HepG2 (cell line): ENCODE measurements at regions of chr14 and their contacts with region 1.

Region 1: GRCh38 chr14:23640524-23641141 is 4.5 kb downstream of the DHRS2 start:
- DNase-seq: peak; percentile 54
- ATAC-seq: no peak
- H3K4me3 ChIP-seq: peak overlapping the region in 1 of 3 experiments; percentile 74; a peak in 1 of 6 replicates
- H3K27ac ChIP-seq: peak overlapping the region; percentile 59
- H3K4me1 ChIP-seq: peaks cover 65% of the 10 kb centered on the region
- H3K27me3 ChIP-seq: no peaks in the 10 kb centered on the region; a peak in 1 of 5 replicates
- CTCF ChIP-seq: no peak
- EP300 ChIP-seq: no peak
- POLR2A ChIP-seq: peak in 1 of 2 experiments; percentile 77; a peak in 2 of 4 replicates
- RAD21 ChIP-seq: no peak

Region 2: GRCh38 chr14:23301288-23301968 is 339.2 kb before region 1 on chr14:
- CTCF ChIA-PET with region 1: no interaction called
- POLR2A ChIA-PET with region 1: interaction called, 10 read pairs
- in situ Hi-C with region 1: no loop called
- intact Hi-C with region 1: no loop called
- DNase-seq: peak; percentile 100
- ATAC-seq: peak; percentile 87
- H3K4me3 ChIP-seq: peak overlapping the region; percentile 67 to 88 (median 75)
- H3K27ac ChIP-seq: peak overlapping the region; percentile 91
- H3K4me1 ChIP-seq: peaks cover 57% of the 10 kb centered on the region
- H3K27me3 ChIP-seq: no peaks in the 10 kb centered on the region; a peak in 1 of 5 replicates
- CTCF ChIP-seq: peak; percentile 92
- EP300 ChIP-seq: peak in 1 of 2 experiments; percentile 54; a peak in 2 of 4 replicates
- POLR2A ChIP-seq: no peak
- RAD21 ChIP-seq: peak; percentile 87

Region 3: DNA sequence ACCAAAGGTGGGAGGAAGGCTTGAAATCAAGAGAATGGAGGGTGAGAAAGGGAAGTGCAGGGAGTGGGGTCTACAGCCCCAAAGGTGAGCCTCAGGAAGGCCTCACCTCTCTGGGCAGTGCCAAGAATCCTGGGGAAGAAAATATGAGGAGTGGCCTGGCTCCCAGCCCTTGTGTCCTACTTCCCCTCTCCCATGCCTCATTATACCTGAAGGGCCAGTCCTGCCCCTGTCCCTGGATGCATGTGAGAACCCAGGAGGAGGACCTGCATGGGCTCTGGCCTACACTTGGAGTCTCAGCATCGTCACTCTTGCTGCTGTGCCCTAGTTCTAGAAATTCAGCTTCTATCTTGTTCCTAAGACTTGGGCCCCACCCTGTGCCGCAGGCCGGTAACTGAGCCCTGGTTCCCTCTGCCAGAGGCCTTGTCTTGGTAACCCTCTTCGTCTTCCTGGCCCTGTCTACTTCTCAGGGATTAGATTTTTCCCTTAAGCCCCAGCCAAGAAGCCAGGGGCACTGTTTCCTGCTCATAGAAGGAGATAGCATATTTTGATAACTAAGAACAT is 194.3 kb before region 1 on chr14:
- CTCF ChIA-PET with region 1: no interaction called
- POLR2A ChIA-PET with region 1: no interaction called
- in situ Hi-C with region 1: no loop called
- intact Hi-C with region 1: no loop called
- DNase-seq: no peak
- ATAC-seq: no peak
- H3K4me3 ChIP-seq: no peak overlapping the region
- H3K27ac ChIP-seq: no peak overlapping the region
- H3K4me1 ChIP-seq: peaks cover 12% of the 10 kb centered on the region
- H3K27me3 ChIP-seq: peaks cover 2 to 31% of the 10 kb centered on the region in 2 experiments; a peak in 3 of 5 replicates
- CTCF ChIP-seq: peak; percentile 39
- EP300 ChIP-seq: no peak
- POLR2A ChIP-seq: no peak
- RAD21 ChIP-seq: no peak

Region 4: GRCh38 chr14:23577004-23577681 is 63.5 kb before region 1 on chr14:
- CTCF ChIA-PET with region 1: no interaction called
- POLR2A ChIA-PET with region 1: interaction called, 924 read pairs
- in situ Hi-C with region 1: no loop called
- intact Hi-C with region 1: loop called (anchors 1 kb)
- DNase-seq: no peak
- ATAC-seq: no peak
- H3K4me3 ChIP-seq: no peak overlapping the region; a peak in 1 of 6 replicates
- H3K27ac ChIP-seq: no peak overlapping the region
- H3K4me1 ChIP-seq: peaks cover 45% of the 10 kb centered on the region
- H3K27me3 ChIP-seq: peaks cover 0 to 2% of the 10 kb centered on the region in 2 experiments; a peak in 2 of 5 replicates
- CTCF ChIP-seq: no peak
- EP300 ChIP-seq: no peak
- POLR2A ChIP-seq: no peak
- RAD21 ChIP-seq: no peak

Region 5: DNA sequence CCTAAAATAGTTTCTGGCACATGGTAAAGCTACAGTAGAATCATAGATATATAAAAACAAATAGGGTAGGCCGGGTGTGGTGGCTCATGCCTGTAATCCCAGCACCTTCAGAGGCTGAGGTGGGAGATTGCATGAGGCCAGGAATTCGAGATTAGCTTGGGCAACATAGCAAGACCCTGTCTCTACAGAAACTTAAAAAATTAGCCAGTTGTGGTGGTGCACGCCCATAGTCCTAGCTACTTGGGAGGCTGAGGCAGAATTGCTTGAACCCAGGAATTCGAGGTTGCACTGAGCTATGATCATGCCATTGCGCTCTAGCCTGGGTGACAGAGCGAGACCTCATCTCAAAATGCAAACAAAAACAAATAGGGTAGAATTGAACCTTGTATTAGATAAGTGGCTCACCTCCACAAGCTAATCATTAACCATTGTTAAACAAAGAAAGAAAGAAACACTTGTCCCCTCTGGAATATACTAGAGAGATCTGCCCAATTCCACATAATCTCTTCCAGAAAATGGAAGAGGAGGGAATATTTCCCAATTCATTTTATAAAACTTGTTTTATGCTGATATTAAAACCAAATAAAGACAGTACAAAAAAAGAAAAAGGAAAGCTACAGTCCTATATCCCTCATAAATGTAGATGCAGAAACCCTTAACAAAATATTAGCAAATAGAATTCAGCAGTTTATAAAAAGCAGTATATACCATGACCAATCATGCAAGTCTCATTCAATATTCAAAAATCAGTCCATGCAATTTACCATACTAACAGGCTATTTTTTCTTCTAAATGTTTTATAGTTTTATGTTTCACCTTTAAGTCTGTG is 27.2 kb before region 1 on chr14:
- CTCF ChIA-PET with region 1: no interaction called
- POLR2A ChIA-PET with region 1: interaction called, 1,105 read pairs
- in situ Hi-C with region 1: no loop called
- intact Hi-C with region 1: loop called (anchors 1 kb)
- DNase-seq: peak; percentile 100
- ATAC-seq: peak; percentile 70
- H3K4me3 ChIP-seq: peak overlapping the region in 2 of 3 experiments; percentile 9 to 26; a peak in 3 of 6 replicates
- H3K27ac ChIP-seq: peak overlapping the region; percentile 89
- H3K4me1 ChIP-seq: peaks cover 95% of the 10 kb centered on the region
- H3K27me3 ChIP-seq: no peaks in the 10 kb centered on the region
- CTCF ChIP-seq: no peak; the same call in 1 of the 2 replicates
- EP300 ChIP-seq: peak; percentile 46 to 95; a peak in 2 of 4 replicates
- POLR2A ChIP-seq: 0 out of 4 replicates have a peak, but pooled peaks have one; percentile 26 to 40
- RAD21 ChIP-seq: no peak; the same call in 1 of the 2 replicates

Region 6: DNA sequence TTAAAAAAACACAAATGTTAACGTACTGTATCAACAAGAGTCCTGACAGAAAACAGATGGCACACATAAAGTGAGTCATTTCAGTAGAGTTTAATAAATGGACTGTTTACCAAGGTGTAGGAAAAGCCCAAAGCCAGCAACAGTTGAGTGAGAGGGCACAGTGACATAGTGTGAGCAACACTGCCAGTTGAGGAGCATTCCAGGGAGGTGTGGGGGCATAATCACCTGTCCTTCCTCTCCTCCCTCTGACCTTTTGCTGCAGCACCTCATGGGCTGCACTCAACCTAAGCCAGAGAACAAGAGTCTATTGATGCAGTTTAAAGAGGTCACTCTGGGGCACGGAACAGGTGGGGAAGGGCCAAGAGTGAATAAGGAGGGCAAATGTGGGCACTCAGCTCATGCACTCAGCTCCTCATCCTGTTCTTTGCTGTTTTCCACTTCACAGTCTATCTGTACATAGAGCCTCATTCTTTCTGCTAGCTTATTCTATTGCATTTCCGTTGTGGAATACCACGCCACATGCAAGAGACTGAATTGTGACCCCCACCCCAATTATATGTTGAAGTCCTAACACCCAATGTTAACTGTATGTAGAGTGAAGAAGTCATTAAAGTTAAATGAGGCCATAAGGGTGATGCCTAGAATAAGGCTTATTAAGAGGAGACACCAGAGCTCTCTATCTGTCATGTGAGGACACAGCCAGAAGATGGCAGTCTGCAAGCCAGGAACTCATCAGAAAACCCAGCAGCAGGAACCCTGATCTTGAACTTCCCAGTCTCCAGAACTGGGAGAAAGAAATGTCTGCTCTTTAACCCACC is 25.0 kb after region 1 on chr14:
- CTCF ChIA-PET with region 1: no interaction called
- POLR2A ChIA-PET with region 1: interaction called, 13 read pairs
- in situ Hi-C with region 1: no loop called
- intact Hi-C with region 1: loop called (anchors 1 kb)
- DNase-seq: peak; percentile 85
- ATAC-seq: peak; percentile 87
- H3K4me3 ChIP-seq: no peak overlapping the region
- H3K27ac ChIP-seq: no peak overlapping the region
- H3K4me1 ChIP-seq: peaks cover 17% of the 10 kb centered on the region
- H3K27me3 ChIP-seq: peaks cover 2 to 11% of the 10 kb centered on the region in 2 experiments; a peak in 3 of 5 replicates
- CTCF ChIP-seq: peak; percentile 92
- EP300 ChIP-seq: no peak
- POLR2A ChIP-seq: no peak
- RAD21 ChIP-seq: peak; percentile 89

Region 7: GRCh38 chr14:23881282-23881681 is 240.6 kb after region 1 on chr14:
- CTCF ChIA-PET with region 1: no interaction called
- POLR2A ChIA-PET with region 1: interaction called, 13 read pairs
- in situ Hi-C with region 1: no loop called
- intact Hi-C with region 1: no loop called
- DNase-seq: no peak
- ATAC-seq: no peak
- H3K4me3 ChIP-seq: no peak overlapping the region
- H3K27ac ChIP-seq: no peak overlapping the region
- H3K4me1 ChIP-seq: peaks cover 39% of the 10 kb centered on the region
- H3K27me3 ChIP-seq: peaks cover 0 to 9% of the 10 kb centered on the region in 2 experiments; a peak in 1 of 5 replicates
- CTCF ChIP-seq: no peak
- EP300 ChIP-seq: no peak
- POLR2A ChIP-seq: no peak
- RAD21 ChIP-seq: no peak